GM10248 (cell line): ENCODE measurements at regions of chr7 and their contacts with region 1.

Region 1: DNA sequence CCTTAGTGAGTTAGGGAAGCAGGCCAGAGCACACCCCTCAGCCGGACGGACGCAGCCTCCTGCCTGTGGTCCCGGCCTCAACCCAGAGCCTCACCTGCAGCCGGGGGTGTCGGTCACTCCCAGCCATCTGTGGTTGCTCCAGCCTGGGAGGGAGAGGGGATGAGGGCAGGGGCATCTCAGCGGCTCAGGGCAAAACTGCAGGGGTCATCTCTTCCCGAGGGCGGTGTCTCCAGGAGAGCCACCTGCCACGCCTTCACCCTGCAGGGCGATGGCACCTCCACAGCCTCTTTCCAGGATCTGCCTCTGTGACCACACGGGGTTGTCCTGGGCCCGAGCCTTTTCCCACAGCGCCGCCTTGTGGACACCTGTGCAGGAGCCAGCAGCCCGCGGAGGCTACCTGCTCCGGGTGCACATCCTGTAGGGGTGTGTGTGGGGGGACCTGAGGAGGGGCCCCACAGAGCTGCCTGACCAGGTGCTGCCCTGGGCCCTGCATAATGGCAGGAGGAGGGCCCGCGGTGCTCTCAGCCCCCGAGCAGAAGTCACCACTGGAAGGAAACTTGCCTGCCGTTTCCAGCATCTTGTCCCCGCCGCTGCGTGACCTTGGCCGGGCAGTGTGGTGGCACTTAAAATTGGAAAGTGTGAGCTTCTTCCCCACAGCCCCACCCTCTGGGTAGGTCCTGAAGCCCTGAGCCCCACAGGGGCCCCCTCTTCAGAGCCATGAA is 21.6 kb upstream of the AP5Z1 start:
- DNase-seq: peak; percentile 89
- CTCF ChIP-seq: peak; percentile 94

Region 2: DNA sequence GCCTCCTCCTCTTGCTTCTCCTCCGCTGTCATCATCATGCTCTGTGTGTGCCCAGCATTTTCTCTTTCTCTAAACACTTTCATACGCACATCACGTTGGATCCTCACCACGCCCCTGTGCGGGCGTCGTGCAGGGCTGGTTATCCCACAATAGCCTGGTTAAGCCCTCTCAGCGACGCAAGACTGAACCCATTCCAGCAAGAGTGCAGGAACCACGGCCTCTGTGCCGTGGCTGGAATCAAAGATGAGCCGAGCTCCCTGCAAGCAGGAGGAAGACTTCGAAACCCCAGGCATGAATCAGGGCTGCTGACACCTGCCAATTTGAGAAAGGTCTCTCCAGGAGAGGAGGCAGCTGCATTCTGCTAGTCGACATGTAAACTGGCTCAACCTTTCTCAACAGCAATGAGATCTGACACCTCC is 146.6 kb before region 1 on chr7:
- CTCF ChIA-PET with region 1: interaction called, 10 read pairs
- POLR2A ChIA-PET with region 1: no interaction called
- DNase-seq: no peak
- CTCF ChIP-seq: no peak

Region 3: GRCh38 chr7:4700577-4701235 is 53.2 kb before region 1 on chr7:
- CTCF ChIA-PET with region 1: no interaction called
- POLR2A ChIA-PET with region 1: no interaction called
- DNase-seq: no peak
- CTCF ChIP-seq: no peak

Region 4: DNA sequence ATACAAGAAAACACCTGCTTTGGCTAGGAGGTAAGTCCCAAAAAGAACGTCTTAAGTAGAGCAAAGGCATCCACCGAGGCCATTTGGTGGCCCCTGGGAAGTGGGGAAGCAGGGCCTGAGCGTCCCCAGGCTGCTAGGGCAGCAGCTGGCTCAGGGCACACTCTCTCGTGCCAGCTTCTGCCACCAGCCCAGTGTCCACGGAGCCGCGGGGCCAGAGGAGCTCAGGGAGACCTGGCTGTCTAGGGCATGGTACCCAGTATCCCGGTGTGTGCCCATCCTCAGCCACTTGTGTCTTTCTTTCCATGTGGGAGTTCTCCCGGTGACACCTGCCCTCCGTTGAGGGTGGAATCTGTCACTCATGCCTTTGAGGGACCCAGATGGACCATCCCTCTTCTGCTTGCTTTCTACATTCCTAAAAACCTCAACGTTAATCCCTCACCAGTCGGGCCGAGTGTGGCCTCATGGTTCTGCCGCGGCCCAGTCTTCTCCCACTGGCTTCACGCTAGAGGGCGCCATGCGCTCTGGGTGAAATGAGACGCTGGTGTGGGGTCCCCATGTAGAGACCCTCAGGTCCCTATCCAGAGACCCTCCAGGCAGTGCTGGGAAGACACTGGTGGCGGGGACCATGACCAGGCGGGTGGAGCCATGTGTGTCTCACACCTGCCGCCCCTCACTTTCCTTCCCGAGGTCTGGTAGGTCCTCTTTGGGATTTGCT is 12.1 kb after region 1 on chr7:
- CTCF ChIA-PET with region 1: interaction called, 10 read pairs
- POLR2A ChIA-PET with region 1: no interaction called
- DNase-seq: no peak
- CTCF ChIP-seq: no peak